ENCODE measurements at regions of chr3 and their contacts with region 1.

Region 1: GRCh38 chr3:125967138-125967537 is 1.8 kb upstream of the ROPN1B start:
- DNase-seq: no peak

Region 2: DNA sequence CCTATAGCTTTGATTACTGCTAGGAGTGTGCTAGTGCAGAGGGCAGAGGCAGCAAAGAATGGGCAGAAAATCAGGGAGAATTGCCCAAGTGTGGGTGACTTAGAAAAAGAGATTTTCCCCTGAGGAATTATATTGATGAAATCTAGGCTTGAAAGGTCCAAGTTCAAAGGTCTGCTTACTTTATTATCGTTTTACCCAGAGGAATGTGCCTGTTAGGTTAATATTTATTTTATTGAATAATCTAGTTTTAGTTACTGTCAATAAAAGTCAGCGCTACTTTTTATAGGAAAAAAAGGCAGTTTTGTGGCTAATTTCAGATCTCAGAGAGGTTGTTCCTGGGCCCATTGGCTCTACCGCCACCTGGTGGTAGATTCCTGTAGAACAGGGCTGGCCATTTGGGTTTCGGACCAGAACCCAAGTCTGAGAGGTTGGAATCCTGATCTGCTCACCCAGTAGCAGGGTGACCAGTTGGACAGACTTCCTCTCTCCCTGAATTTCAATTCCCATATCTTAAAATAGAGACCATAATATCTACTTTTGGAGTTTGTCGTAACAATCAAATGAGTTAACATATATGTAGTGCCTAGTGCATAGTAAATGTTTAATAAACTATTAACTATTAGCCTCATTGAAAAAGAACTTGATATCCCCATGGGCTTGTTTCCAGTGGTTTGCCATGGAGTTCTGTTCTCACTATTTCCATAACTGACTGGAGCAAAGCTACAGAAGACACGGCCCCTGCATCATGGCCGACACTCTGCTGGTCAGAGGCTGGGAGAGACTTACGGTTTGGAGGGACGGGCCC is 529.3 kb before region 1 on chr3:
- intact Hi-C with region 1: no loop called
- DNase-seq: peak in 9 of 10 donors; percentile 36 to 93 (median 72)

Region 3: GRCh38 chr3:126083913-126084767 is 117.0 kb after region 1 on chr3 and contains the start of gene SLC41A3:
- intact Hi-C with region 1: loop called (anchors 10 kb)
- DNase-seq: peak; percentile 67 to 98 (median 86)